Cardiac septum (tissue), 1 donor: ENCODE measurements at regions of chr10 and their contacts with region 1.

Region 1: GRCh38 chr10:118106426-118106825 is 59.7 kb upstream of the RAB11FIP2 start:
- DNase-seq: no peak

Region 2: DNA sequence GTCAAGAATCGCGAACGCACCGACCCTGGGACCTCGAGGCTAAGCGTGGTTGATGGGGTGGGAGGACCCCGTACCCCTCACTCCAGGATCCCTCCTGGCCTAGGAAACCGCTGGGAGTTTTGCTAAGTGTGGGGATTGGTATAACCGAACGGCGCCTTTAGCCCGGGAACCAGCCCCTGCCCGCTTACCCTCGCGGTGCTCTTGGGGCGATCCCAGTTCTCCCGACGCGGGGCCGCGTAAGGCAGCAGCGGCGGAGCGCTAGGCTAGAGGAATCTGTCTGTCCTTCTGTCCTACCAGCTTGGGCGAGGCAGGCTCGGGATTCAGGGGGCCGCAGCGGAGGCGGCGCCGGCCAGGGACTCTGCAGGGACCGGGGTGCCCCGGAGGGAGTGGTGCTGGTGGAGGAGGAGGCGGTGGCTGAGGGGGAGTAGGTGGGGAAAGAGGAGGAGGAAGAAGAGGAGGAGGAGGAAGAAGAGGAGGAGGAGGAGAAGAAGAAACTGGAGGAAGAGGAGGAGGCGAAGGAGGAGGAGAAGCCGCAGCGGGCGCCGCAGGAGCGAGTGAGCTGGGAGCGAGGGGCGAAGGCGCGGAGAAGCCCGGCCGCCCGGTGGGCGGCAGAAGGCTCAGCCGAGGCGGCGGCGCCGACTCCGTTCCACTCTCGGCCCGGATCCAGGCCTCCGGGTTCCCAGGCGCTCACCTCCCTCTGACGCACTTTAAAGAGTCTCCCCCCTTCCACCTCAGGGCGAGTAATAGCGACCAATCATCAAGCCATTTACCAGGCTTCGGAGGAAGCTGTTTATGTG is 564.3 kb before region 1 on chr10:
- intact Hi-C with region 1: loop called (anchors 10 kb)
- DNase-seq: peak; percentile 71

Region 3: GRCh38 chr10:117860823-117861222 is 245.6 kb before region 1 on chr10:
- intact Hi-C with region 1: loop called (anchors 10 kb)
- DNase-seq: no peak

Region 4: GRCh38 chr10:117896517-117896916 is 209.9 kb before region 1 on chr10:
- intact Hi-C with region 1: no loop called
- DNase-seq: no peak